ENCODE measurements at regions of chr17 and their contacts with region 1.

Region 1: GRCh38 chr17:40399185-40399584 is 18.5 kb downstream of the TOP2A start:
- DNase-seq: peak; percentile 74
- ATAC-seq: peak; percentile 54
- H3K4me3 ChIP-seq: no peak overlapping the region
- H3K4me3 Mint-ChIP-seq: no peak overlapping the region
- H3K27ac ChIP-seq: no peak overlapping the region
- H3K27ac Mint-ChIP-seq: no peak overlapping the region
- H3K4me1 ChIP-seq: peaks cover 0 to 8% of the 10 kb centered on the region in 2 donors
- H3K4me1 Mint-ChIP-seq: peaks cover 7% of the 10 kb centered on the region
- H3K27me3 ChIP-seq: no peaks in the 10 kb centered on the region
- H3K27me3 Mint-ChIP-seq: no peaks in the 10 kb centered on the region
- CTCF ChIP-seq: peak; percentile 88

Region 2: GRCh38 chr17:40417609-40418427 is 18.6 kb after region 1 on chr17 and contains the start of gene TOP2A:
- CTCF ChIA-PET with region 1: interaction called, 65 read pairs
- POLR2A ChIA-PET with region 1: no interaction called
- intact Hi-C with region 1: no loop called
- DNase-seq: peak; percentile 99
- ATAC-seq: peak; percentile 99
- H3K4me3 ChIP-seq: peak within 1 kb of the TSS; percentile 63 to 93 (median 84)
- H3K4me3 Mint-ChIP-seq: peak within 1 kb of the TSS; percentile 89
- H3K27ac ChIP-seq: peak within 1 kb of the TSS; percentile 63 to 72
- H3K27ac Mint-ChIP-seq: peak within 1 kb of the TSS; percentile 86
- H3K4me1 ChIP-seq: peaks cover 7 to 17% of the 10 kb centered on the region in 2 donors
- H3K4me1 Mint-ChIP-seq: peaks cover 15% of the 10 kb centered on the region
- H3K27me3 ChIP-seq: no peaks in the 10 kb centered on the region
- H3K27me3 Mint-ChIP-seq: no peaks in the 10 kb centered on the region
- CTCF ChIP-seq: no peak
- total RNA-seq, gene TOP2A: 3.0 and 3.1 TPM in 2 replicates

Region 3: GRCh38 chr17:40551879-40552768 is 152.9 kb after region 1 on chr17:
- CTCF ChIA-PET with region 1: interaction called, 13 read pairs
- POLR2A ChIA-PET with region 1: no interaction called
- intact Hi-C with region 1: no loop called
- DNase-seq: peak; percentile 52
- ATAC-seq: no peak
- H3K4me3 ChIP-seq: no peak overlapping the region
- H3K4me3 Mint-ChIP-seq: peak overlapping the region; percentile 84
- H3K27ac ChIP-seq: peak overlapping the region; percentile 83 to 98
- H3K27ac Mint-ChIP-seq: peak overlapping the region; percentile 92
- H3K4me1 ChIP-seq: peaks cover 98 to 100% of the 10 kb centered on the region in 2 donors
- H3K4me1 Mint-ChIP-seq: peaks cover 100% of the 10 kb centered on the region
- H3K27me3 ChIP-seq: no peaks in the 10 kb centered on the region
- H3K27me3 Mint-ChIP-seq: no peaks in the 10 kb centered on the region
- CTCF ChIP-seq: no peak